AG04449 (cell line): ENCODE measurements at regions of chr14 and their contacts with region 1.

Region 1: DNA sequence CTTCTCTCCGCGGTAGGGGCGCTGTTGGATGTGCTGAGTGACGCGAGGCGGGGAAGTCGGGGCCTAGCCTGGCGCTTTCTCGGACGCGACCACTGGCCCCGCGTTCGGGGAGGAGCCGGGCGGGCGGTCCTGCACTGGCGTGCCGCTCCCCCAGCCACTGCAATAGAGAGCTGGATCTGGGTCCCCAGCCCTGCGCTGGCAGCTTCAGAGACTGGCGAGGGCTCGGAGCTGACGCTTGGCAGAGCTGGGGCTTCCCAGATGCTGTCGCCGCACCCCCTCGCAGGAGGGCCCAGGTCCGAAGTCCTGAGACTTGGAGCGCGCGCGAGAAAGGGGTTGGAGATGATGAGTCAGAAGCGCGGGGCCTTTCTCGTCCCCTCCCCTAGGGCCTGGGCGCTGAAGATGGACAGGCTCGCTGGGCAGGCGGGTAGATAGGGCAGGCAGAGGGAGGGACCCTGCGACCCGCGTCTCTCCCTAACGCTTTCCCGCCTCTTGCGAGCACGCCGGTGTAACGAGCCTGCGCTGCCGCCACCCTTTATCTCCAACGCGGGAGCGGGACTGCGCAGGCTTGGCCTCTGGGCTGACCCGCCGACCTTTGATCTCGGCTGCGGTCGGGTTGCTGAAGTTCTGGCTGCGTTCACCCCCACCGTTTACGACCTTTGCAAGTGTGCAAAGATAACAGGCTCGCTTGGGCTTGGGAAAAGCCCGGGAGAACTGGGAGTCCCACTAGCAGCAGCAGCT is 3.0 kb downstream of the TMEM253 start:
- DNase-seq: peak; percentile 71
- H3K4me3 ChIP-seq: peak overlapping the region; percentile 93
- CTCF ChIP-seq: peak; percentile 90

Region 2: GRCh38 chr14:20970983-20971704 is 132.7 kb before region 1 on chr14:
- CTCF ChIA-PET with region 1: interaction called, 31 read pairs
- POLR2A ChIA-PET with region 1: interaction called, 4 read pairs
- DNase-seq: no peak
- H3K4me3 ChIP-seq: peak overlapping the region; percentile 73
- CTCF ChIP-seq: peak; percentile 98

Region 3: GRCh38 chr14:21003788-21004346 is 100.0 kb before region 1 on chr14:
- CTCF ChIA-PET with region 1: interaction called, 684 read pairs
- POLR2A ChIA-PET with region 1: interaction called, 3 read pairs
- DNase-seq: no peak
- H3K4me3 ChIP-seq: no peak overlapping the region
- CTCF ChIP-seq: no peak

Region 4: GRCh38 chr14:21039585-21040369 is 64.1 kb before region 1 on chr14:
- CTCF ChIA-PET with region 1: interaction called, 62 read pairs
- POLR2A ChIA-PET with region 1: no interaction called
- DNase-seq: peak; percentile 29
- H3K4me3 ChIP-seq: no peak overlapping the region
- CTCF ChIP-seq: peak; percentile 56

Region 5: DNA sequence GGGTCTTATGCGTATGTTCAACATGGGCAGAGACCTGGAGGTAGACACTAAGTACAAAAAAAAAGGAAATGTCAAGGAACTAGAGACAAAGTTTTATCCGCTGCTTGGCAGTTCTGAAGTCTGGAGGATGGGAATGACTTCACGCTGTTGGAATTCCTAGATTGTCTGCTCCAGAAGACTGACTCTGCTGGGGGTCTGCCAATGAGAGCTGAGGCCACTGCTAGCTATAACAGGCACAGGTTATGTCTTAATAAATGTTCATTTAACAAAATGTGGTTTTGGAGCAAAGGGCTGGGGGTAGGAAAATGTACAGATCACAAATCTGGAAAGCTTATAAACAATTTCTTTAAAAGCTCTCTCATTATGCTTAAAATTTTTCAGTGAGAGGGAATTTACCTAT is 40.4 kb before region 1 on chr14:
- CTCF ChIA-PET with region 1: interaction called, 300 read pairs
- POLR2A ChIA-PET with region 1: interaction called, 5 read pairs
- DNase-seq: no peak
- H3K4me3 ChIP-seq: no peak overlapping the region
- CTCF ChIP-seq: no peak

Region 6: GRCh38 chr14:21092273-21093011 is 11.4 kb before region 1 on chr14:
- CTCF ChIA-PET with region 1: interaction called, 287 read pairs
- POLR2A ChIA-PET with region 1: interaction called, 3 read pairs
- DNase-seq: no peak
- H3K4me3 ChIP-seq: no peak overlapping the region
- CTCF ChIP-seq: peak; percentile 100